Activated naive CD4-positive, alpha-beta T cell treated with anti-CD3 and anti-CD28 coated beads for 36 hours (primary cell): ENCODE measurements at regions of chr11 and their contacts with region 1.

Region 1: GRCh38 chr11:33257897-33258630 is 883 bp downstream of the HIPK3 start:
- DNase-seq: peak; percentile 77
- H3K4me3 Mint-ChIP-seq: peak overlapping the region; percentile 91
- H3K27ac Mint-ChIP-seq: peak overlapping the region; percentile 93
- H3K4me1 Mint-ChIP-seq: peaks cover 37% of the 10 kb centered on the region
- H3K27me3 Mint-ChIP-seq: no peaks in the 10 kb centered on the region

Region 2: GRCh38 chr11:32583459-32584271 is 674.4 kb before region 1 on chr11 and contains the start of gene EIF3M:
- CTCF ChIA-PET with region 1: no interaction called
- intact Hi-C with region 1: loop called (anchors 2 kb)
- DNase-seq: peak; percentile 97
- H3K4me3 Mint-ChIP-seq: peak within 1 kb of the TSS; percentile 95
- H3K27ac Mint-ChIP-seq: peak within 1 kb of the TSS; percentile 94
- H3K4me1 Mint-ChIP-seq: peaks cover 38% of the 10 kb centered on the region
- H3K27me3 Mint-ChIP-seq: no peaks in the 10 kb centered on the region
- total RNA-seq, gene EIF3M: 342 to 358 TPM

Region 3: DNA sequence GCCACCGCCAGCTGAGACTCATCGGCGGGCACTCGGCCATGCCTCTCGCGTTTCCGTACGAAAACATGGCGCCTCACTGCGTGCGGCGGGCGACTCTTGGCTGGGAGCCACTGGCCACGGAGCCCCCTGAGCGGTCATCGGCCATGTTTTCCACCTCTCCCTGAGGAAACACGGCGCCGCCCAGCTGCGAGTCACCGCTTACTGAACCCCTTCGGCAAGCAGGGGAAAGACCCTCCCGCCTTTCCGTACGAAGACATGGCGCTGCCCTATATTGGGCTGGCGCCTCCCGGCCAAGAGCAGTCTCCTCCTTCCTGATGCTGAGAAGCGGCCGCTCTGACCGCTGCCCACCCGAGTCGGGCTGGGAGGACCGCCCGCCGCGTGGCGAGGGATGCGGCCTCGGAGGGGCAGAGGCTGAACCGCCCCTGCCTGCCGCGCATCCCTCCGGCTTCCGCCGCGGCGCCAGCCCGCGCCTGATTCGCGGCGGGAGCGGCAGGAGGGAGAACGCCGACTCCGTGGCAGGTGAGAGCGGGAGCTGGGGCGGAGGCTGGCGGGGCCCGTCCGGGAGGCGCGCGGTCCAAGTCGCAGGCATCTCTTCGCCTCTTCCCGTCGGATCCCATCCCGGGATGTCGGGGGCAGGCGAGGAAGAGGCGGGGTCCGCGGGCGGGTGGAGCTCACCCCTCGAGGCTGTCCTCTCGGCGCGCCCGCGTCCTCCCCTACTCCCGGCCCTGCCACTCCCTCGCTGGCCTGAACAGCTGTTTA is 218.6 kb before region 1 on chr11 and contains the start of gene TCP11L1:
- CTCF ChIA-PET with region 1: no interaction called
- intact Hi-C with region 1: loop called (anchors 1 kb)
- DNase-seq: peak; percentile 88
- H3K4me3 Mint-ChIP-seq: peak within 1 kb of the TSS; percentile 85
- H3K27ac Mint-ChIP-seq: peak within 1 kb of the TSS; percentile 92
- H3K4me1 Mint-ChIP-seq: peaks cover 25% of the 10 kb centered on the region
- H3K27me3 Mint-ChIP-seq: no peaks in the 10 kb centered on the region
- total RNA-seq, gene TCP11L1: 4.8 to 5.7 TPM

Region 4: DNA sequence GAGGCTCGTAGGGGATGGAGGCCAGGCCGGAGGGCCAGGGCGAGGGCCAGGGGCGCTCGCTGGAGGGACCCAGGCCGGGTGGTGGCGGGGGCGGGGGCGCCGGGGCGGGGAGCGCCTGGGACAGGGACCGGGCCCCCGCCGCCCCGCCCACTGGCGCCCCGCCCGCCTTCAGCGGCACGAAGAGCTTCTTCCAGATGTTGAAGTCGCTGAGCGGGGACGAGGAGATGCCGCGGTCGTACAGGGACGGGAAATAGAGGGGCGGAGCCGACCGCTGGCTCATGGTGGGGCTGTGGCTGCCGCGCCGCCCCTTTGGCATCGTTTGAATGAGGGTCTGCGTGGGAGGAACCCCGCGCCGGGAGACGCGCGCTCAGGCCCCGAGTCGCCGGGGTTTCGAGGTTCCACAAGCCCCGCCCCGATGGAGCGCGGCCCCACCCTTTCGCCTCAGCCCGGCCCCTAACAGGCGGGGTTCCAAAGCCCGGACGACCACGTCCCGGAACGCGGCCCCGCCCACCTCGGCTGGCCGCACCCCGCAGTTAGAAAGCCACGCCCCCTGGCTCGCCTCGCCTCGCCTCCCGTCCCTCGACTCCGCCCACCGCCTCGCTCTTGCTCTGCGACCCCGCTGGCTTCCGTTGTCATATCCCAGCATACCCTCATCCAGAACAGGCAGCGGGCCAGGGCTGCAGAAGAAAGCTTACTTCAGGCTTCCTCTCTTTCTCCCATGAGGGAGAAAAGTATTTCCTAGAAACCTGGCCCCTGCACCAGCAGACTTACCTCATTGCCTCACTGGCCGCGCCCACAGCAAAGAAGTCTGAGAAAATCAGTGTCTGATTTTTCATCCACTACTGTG is 442.6 kb after region 1 on chr11 and contains the start of gene C11orf91:
- CTCF ChIA-PET with region 1: no interaction called
- intact Hi-C with region 1: loop called (anchors 1 kb)
- DNase-seq: peak; percentile 94
- H3K4me3 Mint-ChIP-seq: peak within 1 kb of the TSS; percentile 85
- H3K27ac Mint-ChIP-seq: peak within 1 kb of the TSS; percentile 61
- H3K4me1 Mint-ChIP-seq: peaks cover 7% of the 10 kb centered on the region
- H3K27me3 Mint-ChIP-seq: peaks cover 8% of the 10 kb centered on the region
- total RNA-seq, gene C11orf91: not detected

Region 5: GRCh38 chr11:33773987-33774735 is 516.1 kb after region 1 on chr11 and contains the start of gene FBXO3:
- CTCF ChIA-PET with region 1: no interaction called
- intact Hi-C with region 1: loop called (anchors 2 kb)
- DNase-seq: peak; percentile 82
- H3K4me3 Mint-ChIP-seq: peak within 1 kb of the TSS; percentile 90
- H3K27ac Mint-ChIP-seq: peak within 1 kb of the TSS; percentile 85
- H3K4me1 Mint-ChIP-seq: peaks cover 40% of the 10 kb centered on the region
- H3K27me3 Mint-ChIP-seq: peaks cover 12% of the 10 kb centered on the region
- total RNA-seq, gene FBXO3: 12.2 to 12.9 TPM

Region 6: GRCh38 chr11:34051349-34052035 is 793.4 kb after region 1 on chr11 and contains the start of gene CAPRIN1:
- CTCF ChIA-PET with region 1: no interaction called
- intact Hi-C with region 1: loop called (anchors 5 kb)
- DNase-seq: peak; percentile 86
- H3K4me3 Mint-ChIP-seq: peak within 1 kb of the TSS; percentile 96
- H3K27ac Mint-ChIP-seq: peak within 1 kb of the TSS; percentile 97
- H3K4me1 Mint-ChIP-seq: peaks cover 14% of the 10 kb centered on the region
- H3K27me3 Mint-ChIP-seq: no peaks in the 10 kb centered on the region
- total RNA-seq, gene CAPRIN1: 274 to 289 TPM